A549 (cell line): ENCODE measurements at regions of chr14 and their contacts with region 1.

Region 1: GRCh38 chr14:24160850-24161804 is at the start of gene IRF9:
- DNase-seq: peak; percentile 95 to 96
- ATAC-seq: peak; percentile 79 to 94
- H3K4me3 ChIP-seq: peak within 1 kb of the TSS; percentile 47
- H3K27ac ChIP-seq: peak within 1 kb of the TSS; percentile 86 to 91
- H3K4me1 ChIP-seq: peaks cover 25% of the 10 kb centered on the region
- CTCF ChIP-seq: peak; percentile 92
- EP300 ChIP-seq: no peak
- POLR2A ChIP-seq: no peak
- RAD21 ChIP-seq: peak; percentile 72 to 78
- polyA plus RNA-seq, gene IRF9: 23.1 and 30.2 TPM in 2 replicates

Region 2: GRCh38 chr14:24093901-24094761 is 67.0 kb before region 1 on chr14 and contains the start of gene PCK2:
- CTCF ChIA-PET with region 1: interaction called, 36 read pairs
- POLR2A ChIA-PET with region 1: interaction called, 6 read pairs
- DNase-seq: peak; percentile 95 to 97
- ATAC-seq: peak; percentile 93 to 94
- H3K4me3 ChIP-seq: peak within 1 kb of the TSS; percentile 70
- H3K27ac ChIP-seq: peak within 1 kb of the TSS; percentile 95 to 100
- H3K4me1 ChIP-seq: peaks cover 18% of the 10 kb centered on the region
- CTCF ChIP-seq: no peak
- EP300 ChIP-seq: no peak
- POLR2A ChIP-seq: peak; percentile 95
- RAD21 ChIP-seq: no peak
- polyA plus RNA-seq, gene PCK2: 52.1 and 60.2 TPM in 2 replicates

Region 3: DNA sequence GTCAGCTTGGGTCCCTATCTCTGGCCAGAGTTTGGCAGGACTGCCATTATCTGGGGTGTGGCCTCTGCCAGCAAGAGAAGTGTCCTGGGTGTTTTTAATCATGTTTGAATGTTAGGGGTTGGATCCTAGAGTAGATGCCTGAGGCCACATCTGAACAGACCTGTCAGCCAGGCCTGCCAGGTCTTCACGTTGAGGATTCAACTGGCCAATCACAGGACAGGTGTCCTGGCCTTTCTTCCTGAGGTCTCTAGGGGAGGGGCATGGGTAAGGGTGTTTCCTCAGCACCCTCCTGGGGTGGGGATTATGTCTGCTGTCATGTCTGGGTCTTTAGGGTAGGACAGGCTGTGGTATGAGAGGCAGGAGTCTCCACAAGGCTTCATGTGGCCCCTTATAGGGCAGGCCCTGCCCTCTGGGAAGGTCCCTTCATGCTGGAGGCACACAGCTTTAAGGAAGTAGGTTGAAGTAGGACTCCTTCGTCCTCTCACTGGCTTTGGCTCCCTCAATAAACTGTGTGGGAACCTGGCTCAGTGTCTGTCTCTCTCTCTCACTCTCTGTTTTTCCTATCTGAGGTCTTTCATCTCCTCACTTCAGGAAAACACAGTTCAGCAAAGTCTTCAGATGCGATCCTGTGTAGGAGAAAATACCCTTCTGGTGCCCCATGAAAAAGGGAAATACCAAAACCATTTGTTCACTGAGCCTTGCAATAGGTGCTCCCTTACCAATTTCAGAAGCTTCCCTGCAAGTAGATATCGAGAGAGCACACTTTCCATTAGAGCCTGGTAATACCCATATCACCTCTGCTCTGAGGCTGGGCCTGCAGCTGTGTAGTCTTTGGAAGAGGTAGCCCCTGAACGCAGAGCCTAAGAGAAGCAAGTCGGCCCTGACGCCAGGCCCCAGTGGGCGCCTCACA is 37.4 kb before region 1 on chr14:
- CTCF ChIA-PET with region 1: interaction called, 22 read pairs
- POLR2A ChIA-PET with region 1: no interaction called
- DNase-seq: no peak
- ATAC-seq: peak in 1 of 2 experiments; percentile 31; a peak in 2 of 6 replicates
- H3K4me3 ChIP-seq: no peak overlapping the region
- H3K27ac ChIP-seq: no peak overlapping the region
- H3K4me1 ChIP-seq: no peaks in the 10 kb centered on the region
- CTCF ChIP-seq: no peak
- EP300 ChIP-seq: no peak
- POLR2A ChIP-seq: no peak
- RAD21 ChIP-seq: no peak

Region 4: DNA sequence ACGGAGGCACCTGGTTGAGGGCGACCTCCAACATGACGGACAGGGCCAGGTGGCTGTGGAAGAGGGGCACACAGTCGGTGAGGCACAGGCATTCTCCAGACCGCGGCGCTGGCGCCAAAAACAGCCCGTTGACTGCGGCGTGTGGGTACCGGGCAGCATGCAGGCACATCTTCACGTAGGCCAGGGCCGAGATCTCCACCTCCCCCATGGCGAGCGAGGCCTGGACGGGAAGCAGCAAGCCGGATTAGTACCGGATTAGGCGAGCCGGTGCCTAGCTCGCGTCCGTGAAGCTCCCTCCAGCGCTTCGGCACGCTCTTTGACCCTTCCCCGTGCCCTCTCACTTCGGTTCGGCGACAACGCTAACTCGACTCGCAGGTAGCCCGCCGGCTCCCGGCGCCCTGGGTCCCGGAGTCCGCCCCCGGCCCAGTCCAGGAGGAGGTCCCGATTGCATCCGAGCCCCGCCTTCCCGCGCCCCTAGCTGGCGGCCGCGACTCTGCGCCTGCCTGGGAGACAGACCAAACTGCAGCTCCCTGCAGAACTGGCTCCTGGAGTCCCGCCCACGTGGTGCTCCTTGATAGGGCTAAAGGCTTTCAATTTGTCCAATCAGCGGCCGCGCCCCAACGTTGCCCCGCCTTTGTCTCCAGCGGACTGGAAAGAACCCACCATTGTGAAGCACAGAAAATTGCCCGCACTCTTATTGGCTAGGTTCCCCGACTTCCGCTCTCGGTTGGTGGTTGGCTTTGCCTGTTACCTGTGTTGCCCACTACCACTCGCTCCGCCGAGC is 19.8 kb before region 1 on chr14 and contains the start of gene EMC9:
- CTCF ChIA-PET with region 1: interaction called, 168 read pairs
- POLR2A ChIA-PET with region 1: interaction called, 13 read pairs
- DNase-seq: peak; percentile 99
- ATAC-seq: peak; percentile 81 to 93
- H3K4me3 ChIP-seq: peak within 1 kb of the TSS; percentile 59
- H3K27ac ChIP-seq: peak within 1 kb of the TSS; percentile 86 to 95
- H3K4me1 ChIP-seq: peaks cover 39% of the 10 kb centered on the region
- CTCF ChIP-seq: no peak
- EP300 ChIP-seq: no peak
- POLR2A ChIP-seq: peak; percentile 81; the same call in 1 of the 2 replicates
- RAD21 ChIP-seq: no peak; a peak in 1 of 5 replicates
- polyA plus RNA-seq, gene EMC9: 20.7 and 21.5 TPM in 2 replicates

Region 5: DNA sequence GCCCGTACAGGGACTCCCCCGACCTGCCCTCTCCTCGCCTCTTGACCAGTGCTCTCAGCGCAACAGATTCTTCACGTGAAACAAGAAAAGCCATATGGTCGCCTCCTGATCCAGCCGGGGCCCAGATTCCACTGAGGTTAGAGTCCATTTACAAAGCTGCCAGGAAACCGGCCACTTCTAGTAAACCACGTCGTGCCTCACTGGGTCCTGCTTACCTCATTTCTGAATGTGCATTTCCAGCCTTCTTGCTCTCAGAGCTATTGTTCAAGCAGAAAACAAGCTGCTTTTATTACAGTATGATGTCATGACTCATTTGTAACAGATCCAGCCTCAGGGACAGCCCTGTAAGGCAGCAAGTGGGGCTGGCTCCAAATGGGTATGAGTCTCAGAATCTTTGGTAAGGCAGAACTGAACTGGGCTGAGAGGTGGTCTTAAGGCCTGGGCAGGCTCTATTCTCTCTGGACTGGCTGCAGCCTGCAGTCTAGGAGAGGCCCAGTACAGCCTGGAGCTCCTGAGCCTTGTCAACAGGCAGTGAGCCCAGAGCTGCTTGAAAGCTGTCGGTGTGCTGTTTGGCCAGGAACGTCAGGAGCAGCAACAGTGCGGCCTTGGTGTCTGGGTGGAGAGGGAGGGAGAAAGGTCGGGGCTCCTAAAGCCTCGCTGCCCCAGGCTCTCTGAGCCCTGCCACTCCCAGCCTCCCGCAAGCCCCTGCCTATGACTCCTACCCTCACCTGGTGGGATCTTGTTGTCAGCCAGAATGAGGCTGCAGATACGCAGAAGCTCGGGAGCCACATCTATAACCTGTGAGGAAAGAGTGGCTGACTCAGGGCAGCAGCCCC is 19.1 kb after region 1 on chr14:
- CTCF ChIA-PET with region 1: interaction called, 64 read pairs
- POLR2A ChIA-PET with region 1: interaction called, 5 read pairs
- DNase-seq: no peak
- ATAC-seq: 0 out of 6 replicates have a peak, but pooled peaks of 1 of the 2 experiments have one; percentile 3
- H3K4me3 ChIP-seq: no peak overlapping the region
- H3K27ac ChIP-seq: no peak overlapping the region
- H3K4me1 ChIP-seq: no peaks in the 10 kb centered on the region
- CTCF ChIP-seq: no peak
- EP300 ChIP-seq: no peak
- POLR2A ChIP-seq: no peak
- RAD21 ChIP-seq: no peak

Region 6: GRCh38 chr14:24381363-24382063 is 220.4 kb after region 1 on chr14:
- CTCF ChIA-PET with region 1: no interaction called
- POLR2A ChIA-PET with region 1: no interaction called
- DNase-seq: no peak
- ATAC-seq: no peak
- H3K4me3 ChIP-seq: no peak overlapping the region
- H3K27ac ChIP-seq: no peak overlapping the region
- H3K4me1 ChIP-seq: no peaks in the 10 kb centered on the region
- CTCF ChIP-seq: no peak
- EP300 ChIP-seq: no peak
- POLR2A ChIP-seq: no peak
- RAD21 ChIP-seq: no peak